ENCODE measurements at regions of chr1 and their contacts with region 1.

Region 1: GRCh38 chr1:16187748-16188401 is 24.6 kb downstream of the ARHGEF19 start:
- DNase-seq: peak; percentile 89
- H3K4me3 ChIP-seq: no peak overlapping the region
- H3K27ac ChIP-seq: peak overlapping the region; percentile 58
- H3K4me1 ChIP-seq: peaks cover 54% of the 10 kb centered on the region
- H3K27me3 ChIP-seq: no peaks in the 10 kb centered on the region
- CTCF ChIP-seq: peak; percentile 85 to 97

Region 2: DNA sequence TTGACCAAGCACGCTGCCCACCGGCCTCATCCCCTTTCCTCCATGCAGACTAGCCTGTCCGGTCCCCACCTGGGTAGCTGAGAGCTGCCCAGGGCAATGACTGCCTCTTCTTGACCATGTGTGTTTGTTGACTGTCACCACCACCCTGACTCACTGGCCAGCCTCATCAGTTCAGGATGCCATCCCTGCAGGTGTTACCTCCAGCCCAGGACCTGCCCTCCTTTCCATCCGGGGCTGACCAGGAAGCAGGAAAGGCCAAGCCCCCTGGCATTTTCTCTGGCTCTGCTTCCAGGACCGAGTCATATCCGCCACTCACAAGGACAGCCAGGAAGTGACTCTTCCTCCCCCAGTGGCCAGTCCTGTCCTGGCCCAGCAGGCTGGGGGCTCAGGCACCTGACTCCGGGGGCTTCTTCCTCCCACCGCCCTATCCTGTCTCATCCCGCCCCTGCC is 49.1 kb before region 1 on chr1:
- CTCF ChIA-PET with region 1: no interaction called
- dilution Hi-C with region 1: no loop called
- in situ Hi-C with region 1: no loop called
- intact Hi-C with region 1: loop called (anchors 1 kb)
- DNase-seq: no peak
- H3K4me3 ChIP-seq: no peak overlapping the region
- H3K27ac ChIP-seq: peak overlapping the region; percentile 43
- H3K4me1 ChIP-seq: peaks cover 58% of the 10 kb centered on the region
- H3K27me3 ChIP-seq: no peaks in the 10 kb centered on the region
- CTCF ChIP-seq: no peak

Region 3: GRCh38 chr1:16155532-16156410 is 32.1 kb before region 1 on chr1 and contains the start of gene EPHA2:
- CTCF ChIA-PET with region 1: no interaction called
- dilution Hi-C with region 1: no loop called
- in situ Hi-C with region 1: loop called in 1 of 2 experiments (anchors 5 kb)
- intact Hi-C with region 1: loop called (anchors 1 kb)
- DNase-seq: peak; percentile 91
- H3K4me3 ChIP-seq: peak within 1 kb of the TSS; percentile 87 to 97 (median 89)
- H3K27ac ChIP-seq: peak within 1 kb of the TSS; percentile 84
- H3K4me1 ChIP-seq: peaks cover 54% of the 10 kb centered on the region
- H3K27me3 ChIP-seq: no peaks in the 10 kb centered on the region
- CTCF ChIP-seq: no peak
- total RNA-seq, gene EPHA2: 77.3 to 181 TPM

Region 4: DNA sequence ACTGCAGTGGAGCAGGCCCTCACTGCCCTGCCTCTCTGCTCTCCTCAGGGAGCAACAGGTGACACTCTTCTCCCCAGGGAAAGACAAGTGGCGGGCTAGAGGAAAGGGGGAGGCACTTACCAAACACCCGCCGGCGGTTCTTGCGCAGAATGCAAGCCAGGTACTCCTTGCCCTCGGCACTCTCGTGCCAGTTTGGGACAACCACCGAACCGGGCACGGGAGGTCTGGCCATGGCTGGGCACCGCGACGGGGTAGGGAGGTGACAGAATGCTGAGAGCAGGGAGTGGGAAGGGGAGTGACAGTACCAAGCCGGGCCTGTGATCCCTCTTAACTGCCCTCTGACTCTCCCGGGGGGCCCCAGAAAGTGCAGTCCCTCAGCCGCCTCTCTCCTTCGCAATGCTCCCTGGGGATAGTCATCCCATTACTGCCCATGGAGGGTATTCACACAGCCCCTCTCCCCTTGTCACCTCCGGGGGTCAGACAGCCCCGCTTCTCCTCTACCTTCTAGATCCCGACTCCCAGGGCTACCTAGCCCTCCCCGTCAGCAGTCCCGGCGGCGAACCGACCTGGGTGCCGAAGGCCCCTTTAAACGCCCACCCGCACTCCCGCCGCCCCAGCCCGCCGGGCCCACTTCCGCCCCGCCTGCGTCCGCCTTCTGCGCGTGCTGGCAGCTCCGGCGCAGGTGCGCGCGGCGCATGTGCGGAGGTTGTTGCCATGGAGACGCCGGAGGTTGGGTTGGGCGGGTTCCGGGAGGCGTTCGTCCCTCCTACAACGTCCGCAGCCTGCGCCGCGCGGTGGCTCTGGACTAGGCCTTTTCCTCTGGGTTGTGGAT is 48.9 kb after region 1 on chr1 and contains the start of gene CPLANE2:
- CTCF ChIA-PET with region 1: no interaction called
- dilution Hi-C with region 1: loop called (anchors 10 kb)
- in situ Hi-C with region 1: no loop called
- intact Hi-C with region 1: loop called (anchors 2 kb)
- DNase-seq: peak; percentile 87
- H3K4me3 ChIP-seq: peak within 1 kb of the TSS; percentile 57 to 71 (median 62)
- H3K27ac ChIP-seq: peak within 1 kb of the TSS; percentile 64
- H3K4me1 ChIP-seq: peaks cover 23% of the 10 kb centered on the region
- H3K27me3 ChIP-seq: no peaks in the 10 kb centered on the region
- CTCF ChIP-seq: no peak
- total RNA-seq, gene CPLANE2: 13.3 to 14.8 TPM